Calu3 (cell line): ENCODE measurements at regions of chr6 and their contacts with region 1.

Region 1: GRCh38 chr6:159174263-159174969 is 5.2 kb downstream of the FNDC1 start:
- DNase-seq: peak; percentile 84
- H3K4me3 Mint-ChIP-seq: no peak overlapping the region
- H3K27ac Mint-ChIP-seq: no peak overlapping the region
- H3K4me1 Mint-ChIP-seq: no peaks in the 10 kb centered on the region
- H3K27me3 Mint-ChIP-seq: peaks cover 100% of the 10 kb centered on the region
- CTCF ChIP-seq: peak; percentile 72

Region 2: DNA sequence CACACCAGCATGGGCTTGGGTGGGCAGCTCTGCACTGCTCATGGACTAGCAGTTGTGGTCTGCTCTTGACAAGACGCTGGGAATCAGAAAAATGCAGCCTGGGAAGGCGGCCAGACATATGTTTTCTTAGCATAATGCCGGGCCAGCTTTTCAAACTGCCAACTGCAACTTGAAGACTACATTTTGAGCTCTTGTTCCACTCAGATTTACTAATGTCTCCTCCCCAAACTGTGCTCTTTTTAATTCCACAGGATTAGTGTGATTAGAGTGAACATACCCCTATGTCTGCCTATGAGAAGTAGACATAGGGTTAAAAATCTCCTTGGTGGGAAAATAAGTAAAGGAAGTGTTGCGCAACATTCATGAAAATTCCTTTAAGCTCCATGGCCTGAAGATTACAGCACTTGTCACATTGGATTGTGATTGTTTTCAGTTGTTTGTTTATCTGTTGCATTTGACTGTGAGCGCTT is 10.5 kb before region 1 on chr6:
- CTCF ChIA-PET with region 1: no interaction called
- intact Hi-C with region 1: no loop called
- DNase-seq: no peak
- H3K4me3 Mint-ChIP-seq: no peak overlapping the region
- H3K27ac Mint-ChIP-seq: no peak overlapping the region
- H3K4me1 Mint-ChIP-seq: no peaks in the 10 kb centered on the region
- H3K27me3 Mint-ChIP-seq: peaks cover 81% of the 10 kb centered on the region
- CTCF ChIP-seq: no peak

Region 3: GRCh38 chr6:159233365-159234101 is 59.1 kb after region 1 on chr6:
- CTCF ChIA-PET with region 1: no interaction called
- intact Hi-C with region 1: no loop called
- DNase-seq: no peak
- H3K4me3 Mint-ChIP-seq: no peak overlapping the region
- H3K27ac Mint-ChIP-seq: no peak overlapping the region
- H3K4me1 Mint-ChIP-seq: no peaks in the 10 kb centered on the region
- H3K27me3 Mint-ChIP-seq: peaks cover 63% of the 10 kb centered on the region
- CTCF ChIP-seq: no peak

Region 4: GRCh38 chr6:159463119-159463829 is 288.9 kb after region 1 on chr6:
- CTCF ChIA-PET with region 1: interaction called, 7 read pairs
- intact Hi-C with region 1: loop called (anchors 5 kb)
- DNase-seq: no peak
- H3K4me3 Mint-ChIP-seq: no peak overlapping the region
- H3K27ac Mint-ChIP-seq: no peak overlapping the region
- H3K4me1 Mint-ChIP-seq: no peaks in the 10 kb centered on the region
- H3K27me3 Mint-ChIP-seq: peaks cover 19% of the 10 kb centered on the region
- CTCF ChIP-seq: peak; percentile 13

Region 5: DNA sequence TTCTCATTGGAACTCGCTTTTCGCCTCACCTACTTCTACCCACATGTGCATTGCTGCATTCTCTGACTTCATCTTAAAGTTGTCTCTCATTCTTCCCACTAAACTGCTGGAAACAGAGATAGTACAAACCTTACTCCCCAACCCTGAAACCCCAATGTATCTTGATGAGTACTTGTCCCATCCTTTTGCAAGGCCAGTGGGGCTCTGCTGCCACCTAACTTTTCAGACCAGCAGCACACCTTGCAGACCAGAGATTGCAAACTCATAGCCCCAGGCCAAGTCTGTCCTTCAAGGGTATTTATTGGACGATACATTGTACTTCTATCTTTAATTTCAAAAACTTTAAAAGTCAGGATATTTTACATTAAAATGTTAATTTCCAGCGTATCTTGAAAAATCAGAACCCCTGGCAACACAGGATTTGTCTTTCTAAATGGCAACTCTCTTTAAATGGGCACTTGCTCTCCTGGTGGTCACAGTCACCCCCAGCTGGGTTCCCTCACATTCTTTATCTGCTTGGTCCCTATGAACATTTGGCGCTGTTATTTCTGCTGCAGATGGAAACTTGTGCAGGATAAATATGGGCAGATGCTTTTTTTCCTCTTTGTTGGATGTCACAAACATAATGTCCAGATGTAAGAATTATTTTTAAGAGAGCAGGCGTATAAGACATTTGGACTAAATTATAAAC is 434.7 kb after region 1 on chr6:
- CTCF ChIA-PET with region 1: no interaction called
- intact Hi-C with region 1: loop called (anchors 2 kb)
- DNase-seq: peak; percentile 58
- H3K4me3 Mint-ChIP-seq: no peak overlapping the region
- H3K27ac Mint-ChIP-seq: no peak overlapping the region
- H3K4me1 Mint-ChIP-seq: no peaks in the 10 kb centered on the region
- H3K27me3 Mint-ChIP-seq: no peaks in the 10 kb centered on the region
- CTCF ChIP-seq: peak; percentile 67

Region 6: GRCh38 chr6:159654483-159655098 is 480.2 kb after region 1 on chr6:
- CTCF ChIA-PET with region 1: interaction called, 9 read pairs
- intact Hi-C with region 1: loop called (anchors 2 kb)
- DNase-seq: peak; percentile 24
- H3K4me3 Mint-ChIP-seq: no peak overlapping the region
- H3K27ac Mint-ChIP-seq: no peak overlapping the region
- H3K4me1 Mint-ChIP-seq: no peaks in the 10 kb centered on the region
- H3K27me3 Mint-ChIP-seq: no peaks in the 10 kb centered on the region
- CTCF ChIP-seq: peak; percentile 55